Gastrocnemius medialis (tissue), 4 donors: ENCODE measurements at regions of chr19 and their contacts with region 1.

Region 1: GRCh38 chr19:1551068-1552040 is 16.8 kb downstream of the MEX3D start:
- DNase-seq: no peak
- ATAC-seq: no peak
- H3K4me3 ChIP-seq: no peak overlapping the region
- H3K27ac ChIP-seq: no peak overlapping the region
- H3K4me1 ChIP-seq: no peaks in the 10 kb centered on the region
- H3K27me3 ChIP-seq: no peaks in the 10 kb centered on the region
- CTCF ChIP-seq: no peak
- POLR2A ChIP-seq: no peak

Region 2: DNA sequence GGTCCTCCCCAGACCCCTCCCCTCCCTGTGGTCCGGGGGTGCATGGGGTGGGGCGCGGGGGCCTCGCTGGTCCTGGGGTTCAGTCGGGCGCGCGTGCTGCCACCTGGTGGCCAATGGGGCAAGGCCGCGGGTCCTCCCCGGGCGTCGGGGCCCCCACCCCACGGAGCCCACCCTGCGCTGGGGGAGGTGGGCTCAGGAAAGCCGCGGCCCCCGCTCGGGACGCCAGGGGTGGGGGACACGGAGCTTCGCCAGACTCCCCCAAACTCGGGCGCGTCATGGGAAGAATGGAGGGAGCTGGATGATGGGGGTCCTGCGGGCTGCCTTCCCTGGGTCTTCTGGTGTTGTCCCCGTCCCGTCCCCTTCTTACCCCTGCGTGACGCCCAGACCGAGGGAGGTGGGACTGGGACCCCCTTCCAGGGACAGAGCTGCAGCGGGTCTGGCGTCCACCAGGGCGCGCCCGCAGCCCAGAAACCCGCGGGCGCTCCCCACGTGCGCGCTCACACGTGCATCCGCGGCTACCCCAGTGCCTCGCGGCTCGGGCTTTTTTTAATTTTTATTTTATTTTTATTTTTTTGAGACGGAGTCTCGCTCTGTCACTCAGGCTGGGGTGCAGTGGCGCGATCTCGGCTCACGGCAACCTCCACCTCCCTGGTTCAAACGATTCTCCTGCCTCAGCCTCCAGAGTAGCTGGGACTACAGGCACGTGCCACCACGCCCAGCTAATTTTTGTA is 120.8 kb after region 1 on chr19:
- in situ Hi-C with region 1: loop called in 2 of 4 experiments (anchors 5 to 10 kb)
- intact Hi-C with region 1: loop called (anchors 1 kb)
- DNase-seq: no peak
- ATAC-seq: peak in 1 of 2 donors; percentile 30
- H3K4me3 ChIP-seq: no peak overlapping the region
- H3K27ac ChIP-seq: no peak overlapping the region
- H3K4me1 ChIP-seq: peaks cover 0 to 10% of the 10 kb centered on the region in 2 donors
- H3K27me3 ChIP-seq: peaks cover 82 to 92% (median 85%) of the 10 kb centered on the region in 3 donors
- CTCF ChIP-seq: peak; percentile 52 to 83 (median 80)
- POLR2A ChIP-seq: no peak

Region 3: GRCh38 chr19:1767464-1767933 is 216.1 kb after region 1 on chr19:
- in situ Hi-C with region 1: loop called in 3 of 4 experiments (anchors 10 to 25 kb)
- intact Hi-C with region 1: loop called (anchors 1 kb)
- DNase-seq: no peak
- ATAC-seq: no peak
- H3K4me3 ChIP-seq: no peak overlapping the region
- H3K27ac ChIP-seq: no peak overlapping the region
- H3K4me1 ChIP-seq: no peaks in the 10 kb centered on the region
- H3K27me3 ChIP-seq: peaks cover 70 to 95% (median 76%) of the 10 kb centered on the region in 3 donors
- CTCF ChIP-seq: peak; percentile 65 to 91 (median 86)
- POLR2A ChIP-seq: no peak